Caco-2 (cell line): ENCODE measurements at regions of chrX and their contacts with region 1.

Region 1: GRCh38 chrX:47540754-47541538 is 20.1 kb upstream of the ARAF start:
- DNase-seq: peak; percentile 77 to 86
- H3K4me3 ChIP-seq: no peak overlapping the region
- H3K4me3 Mint-ChIP-seq: no peak overlapping the region
- H3K27ac Mint-ChIP-seq: no peak overlapping the region
- H3K4me1 ChIP-seq: 0 out of 2 replicates have a peak, but pooled peaks cover 5% of the 10 kb centered on the region
- H3K4me1 Mint-ChIP-seq: no peaks in the 10 kb centered on the region
- H3K27me3 ChIP-seq: no peaks in the 10 kb centered on the region
- H3K27me3 Mint-ChIP-seq: no peaks in the 10 kb centered on the region
- CTCF ChIP-seq: peak; percentile 46 to 55

Region 2: GRCh38 chrX:47560831-47561652 is 20.1 kb after region 1 on chrX and contains the start of gene ARAF:
- CTCF ChIA-PET with region 1: interaction called, 9 read pairs
- POLR2A ChIA-PET with region 1: interaction called, 9 read pairs
- intact Hi-C with region 1: loop called (anchors 1 kb)
- DNase-seq: peak; percentile 97 to 99
- H3K4me3 ChIP-seq: peak within 1 kb of the TSS; percentile 64
- H3K4me3 Mint-ChIP-seq: peak within 1 kb of the TSS; percentile 98
- H3K27ac Mint-ChIP-seq: peak within 1 kb of the TSS; percentile 99
- H3K4me1 ChIP-seq: no peaks in the 10 kb centered on the region
- H3K4me1 Mint-ChIP-seq: peaks cover 7% of the 10 kb centered on the region
- H3K27me3 ChIP-seq: no peaks in the 10 kb centered on the region
- H3K27me3 Mint-ChIP-seq: no peaks in the 10 kb centered on the region
- CTCF ChIP-seq: no peak
- total RNA-seq, gene ARAF: 65.4 and 68.5 TPM in 2 replicates

Region 3: GRCh38 chrX:47628980-47629379 is 88.0 kb after region 1 on chrX:
- CTCF ChIA-PET with region 1: no interaction called
- POLR2A ChIA-PET with region 1: no interaction called
- intact Hi-C with region 1: loop called (anchors 1 kb)
- DNase-seq: peak; percentile 61 to 62
- H3K4me3 ChIP-seq: no peak overlapping the region
- H3K4me3 Mint-ChIP-seq: no peak overlapping the region
- H3K27ac Mint-ChIP-seq: no peak overlapping the region
- H3K4me1 ChIP-seq: no peaks in the 10 kb centered on the region
- H3K4me1 Mint-ChIP-seq: no peaks in the 10 kb centered on the region
- H3K27me3 ChIP-seq: no peaks in the 10 kb centered on the region
- H3K27me3 Mint-ChIP-seq: no peaks in the 10 kb centered on the region
- CTCF ChIP-seq: peak in 1 of 2 experiments; percentile 19

Region 4: DNA sequence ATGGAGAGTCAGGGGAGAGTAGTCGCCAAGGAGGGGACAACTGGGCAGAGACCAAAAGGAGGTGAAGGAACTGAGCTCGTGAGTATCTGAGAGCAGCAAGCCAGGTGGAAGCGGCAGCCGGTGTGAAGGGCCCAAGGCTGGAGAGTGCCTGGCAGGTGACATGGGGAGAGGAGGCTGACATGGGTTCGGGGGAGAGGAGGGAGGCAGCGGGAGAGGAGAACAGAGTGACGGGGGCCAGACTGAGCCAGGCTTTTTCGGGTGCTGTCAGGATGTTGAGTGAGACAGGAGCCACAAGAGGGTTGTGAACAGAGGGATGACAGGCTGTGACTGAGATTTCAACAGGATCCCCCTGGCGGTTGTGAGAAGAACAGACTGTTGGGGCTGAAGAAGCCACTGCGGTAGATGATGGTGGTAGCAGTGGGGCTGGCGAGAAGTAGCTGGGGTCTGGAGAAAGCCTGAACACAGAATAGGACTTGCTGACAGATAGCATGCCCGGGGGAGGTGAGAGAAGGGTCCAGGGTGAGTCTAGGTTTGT is 103.7 kb after region 1 on chrX:
- CTCF ChIA-PET with region 1: no interaction called
- POLR2A ChIA-PET with region 1: no interaction called
- intact Hi-C with region 1: loop called (anchors 1 kb)
- DNase-seq: no peak
- H3K4me3 ChIP-seq: no peak overlapping the region
- H3K4me3 Mint-ChIP-seq: no peak overlapping the region
- H3K27ac Mint-ChIP-seq: no peak overlapping the region
- H3K4me1 ChIP-seq: no peaks in the 10 kb centered on the region
- H3K4me1 Mint-ChIP-seq: peaks cover 13% of the 10 kb centered on the region
- H3K27me3 ChIP-seq: no peaks in the 10 kb centered on the region
- H3K27me3 Mint-ChIP-seq: no peaks in the 10 kb centered on the region
- CTCF ChIP-seq: no peak

Region 5: GRCh38 chrX:47751670-47752069 is 210.7 kb after region 1 on chrX:
- CTCF ChIA-PET with region 1: no interaction called
- POLR2A ChIA-PET with region 1: no interaction called
- intact Hi-C with region 1: loop called (anchors 1 kb)
- DNase-seq: peak; percentile 44 to 55
- H3K4me3 ChIP-seq: no peak overlapping the region
- H3K4me3 Mint-ChIP-seq: no peak overlapping the region
- H3K27ac Mint-ChIP-seq: no peak overlapping the region
- H3K4me1 ChIP-seq: no peaks in the 10 kb centered on the region
- H3K4me1 Mint-ChIP-seq: no peaks in the 10 kb centered on the region
- H3K27me3 ChIP-seq: no peaks in the 10 kb centered on the region
- H3K27me3 Mint-ChIP-seq: peaks cover 7% of the 10 kb centered on the region
- CTCF ChIP-seq: peak; percentile 50 to 64

Region 6: GRCh38 chrX:47796433-47796906 is 255.5 kb after region 1 on chrX:
- CTCF ChIA-PET with region 1: no interaction called
- POLR2A ChIA-PET with region 1: no interaction called
- intact Hi-C with region 1: no loop called
- DNase-seq: no peak
- H3K4me3 ChIP-seq: no peak overlapping the region
- H3K4me3 Mint-ChIP-seq: no peak overlapping the region
- H3K27ac Mint-ChIP-seq: no peak overlapping the region
- H3K4me1 ChIP-seq: no peaks in the 10 kb centered on the region
- H3K4me1 Mint-ChIP-seq: no peaks in the 10 kb centered on the region
- H3K27me3 ChIP-seq: no peaks in the 10 kb centered on the region
- H3K27me3 Mint-ChIP-seq: peaks cover 2% of the 10 kb centered on the region
- CTCF ChIP-seq: no peak